Aorta (tissue), 5 donors: ENCODE measurements at regions of chr3 and their contacts with region 1.

Region 1: DNA sequence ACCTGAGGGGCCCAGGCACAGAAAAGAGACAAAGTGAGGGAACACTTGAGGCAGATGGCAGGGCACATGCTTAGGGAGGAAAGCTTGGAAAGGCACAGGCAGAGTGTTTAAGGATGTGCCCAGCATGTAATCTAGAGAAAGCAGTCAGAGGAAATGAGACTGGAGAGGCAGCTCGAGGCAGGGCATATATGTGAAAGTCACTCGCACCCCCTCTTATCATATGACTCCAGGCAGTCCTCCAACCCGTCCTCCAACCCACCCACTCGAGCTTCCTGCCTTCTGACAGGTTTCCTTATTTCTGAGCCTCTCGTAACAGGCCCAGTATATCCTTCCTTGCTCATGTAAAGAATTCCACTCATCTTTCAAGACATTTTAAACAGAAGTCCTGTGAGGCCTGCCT is 294.0 kb downstream of the SOX2 start:
- DNase-seq: no peak
- ATAC-seq: no peak
- H3K4me3 ChIP-seq: no peak overlapping the region
- H3K27ac ChIP-seq: no peak overlapping the region
- H3K4me1 ChIP-seq: no peaks in the 10 kb centered on the region
- H3K27me3 ChIP-seq: no peaks in the 10 kb centered on the region

Region 2: DNA sequence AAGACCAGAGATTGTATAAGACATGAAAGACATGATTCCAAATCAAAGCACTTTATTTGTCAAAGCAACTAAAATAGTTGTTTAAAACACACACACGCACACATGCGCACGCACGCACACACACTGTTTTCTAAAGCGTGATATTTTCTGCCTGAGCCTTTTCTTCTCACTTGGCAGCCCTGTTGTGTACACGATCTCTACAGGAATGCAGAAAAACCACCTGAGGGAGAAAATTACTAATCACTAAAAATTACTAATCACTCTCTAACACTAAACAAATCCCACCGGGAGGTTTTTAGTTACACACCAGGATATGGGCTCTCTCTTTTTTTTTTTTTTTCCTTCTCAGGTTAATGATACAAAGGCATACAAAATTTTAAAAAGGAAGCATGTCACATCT is 627.5 kb after region 1 on chr3:
- intact Hi-C with region 1: loop called in 1 of 2 experiments (anchors 5 kb)
- DNase-seq: no peak
- ATAC-seq: no peak
- H3K4me3 ChIP-seq: no peak overlapping the region
- H3K27ac ChIP-seq: no peak overlapping the region
- H3K4me1 ChIP-seq: no peaks in the 10 kb centered on the region
- H3K27me3 ChIP-seq: no peaks in the 10 kb centered on the region